Psoas muscle (tissue), 8 donors: ENCODE measurements at regions of chr3 and their contacts with region 1.

Region 1: DNA sequence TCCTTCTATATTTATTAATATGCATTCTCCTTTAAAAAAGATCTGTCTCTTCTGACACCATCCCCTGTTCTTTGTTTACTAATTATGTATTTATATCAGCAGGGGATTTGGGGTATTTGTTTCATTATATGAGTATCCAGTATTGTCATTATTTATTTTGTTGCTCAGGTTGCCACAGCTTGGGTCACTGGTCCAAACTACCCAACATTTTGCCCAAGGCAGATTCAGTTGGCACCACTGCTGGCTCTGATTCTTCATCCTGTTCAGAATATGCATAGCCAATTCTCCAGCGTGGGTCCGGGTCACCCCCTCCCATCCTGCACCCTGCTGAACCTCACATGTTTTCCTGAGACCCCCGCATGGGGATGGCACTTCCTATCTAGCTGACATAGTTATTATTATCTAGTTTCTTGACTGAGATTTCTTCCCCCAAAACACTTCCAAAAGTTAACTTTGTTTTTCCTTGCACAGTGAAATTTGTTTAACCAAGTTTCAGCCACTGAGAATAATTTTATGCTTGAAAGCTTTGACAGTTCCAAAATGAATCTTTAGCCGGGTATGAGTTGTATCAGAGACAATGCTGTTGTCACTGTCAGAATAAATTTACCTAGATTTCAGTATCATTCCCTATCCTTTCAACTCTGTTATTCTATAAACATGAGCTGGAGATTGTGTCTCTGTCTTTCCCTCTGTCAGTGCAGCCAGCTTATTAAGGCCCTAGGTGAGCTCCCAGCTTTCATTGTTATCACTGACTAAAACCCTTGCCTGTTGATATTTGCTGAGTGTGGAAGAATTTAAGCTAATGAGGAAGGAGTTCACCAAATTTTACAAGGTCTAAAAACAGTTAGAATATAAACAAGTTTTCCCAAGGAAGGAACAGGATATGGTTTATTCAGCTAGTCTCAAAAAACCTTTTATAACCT is 70.3 kb downstream of the TGFBR2 start:
- DNase-seq: no peak
- ATAC-seq: no peak
- H3K4me3 ChIP-seq: no peak overlapping the region
- H3K27ac ChIP-seq: no peak overlapping the region
- H3K4me1 ChIP-seq: peaks cover 19% of the 10 kb centered on the region
- H3K27me3 ChIP-seq: no peaks in the 10 kb centered on the region
- CTCF ChIP-seq: no peak

Region 2: GRCh38 chr3:30658328-30659052 is 18.2 kb before region 1 on chr3:
- intact Hi-C with region 1: loop called in 1 of 2 experiments (anchors 2 kb)
- DNase-seq: no peak
- ATAC-seq: peak in 1 of 4 donors; percentile 30
- H3K4me3 ChIP-seq: peak overlapping the region; percentile 13
- H3K27ac ChIP-seq: peak overlapping the region; percentile 50
- H3K4me1 ChIP-seq: peaks cover 41% of the 10 kb centered on the region
- H3K27me3 ChIP-seq: no peaks in the 10 kb centered on the region
- CTCF ChIP-seq: no peak